Right lobe of liver (tissue), 6 donors: ENCODE measurements at regions of chr22 and their contacts with region 1.

Region 1: DNA sequence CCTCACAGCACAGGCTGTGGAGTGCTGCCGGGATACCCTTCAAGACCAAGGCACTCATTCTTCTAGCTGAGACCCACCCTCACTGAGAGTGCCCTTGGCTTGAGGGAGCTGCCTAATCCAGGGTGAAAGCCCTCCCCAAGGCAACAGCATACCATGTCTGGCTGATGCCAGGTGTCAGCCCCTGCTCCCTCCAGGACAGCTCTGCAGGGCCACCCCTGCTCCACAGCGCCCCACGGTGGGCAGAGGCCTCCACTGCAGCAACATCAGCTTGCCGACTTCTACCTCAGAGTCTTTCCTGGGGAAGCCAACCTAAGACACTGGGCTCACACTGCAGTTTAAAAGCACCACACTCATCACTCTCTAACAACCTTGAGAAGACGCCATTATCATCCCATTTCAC is 29.0 kb downstream of the TTLL1 start:
- DNase-seq: no peak
- ATAC-seq: peak; percentile 37 to 55 (median 46)
- H3K4me3 ChIP-seq: no peak overlapping the region
- H3K27ac ChIP-seq: no peak overlapping the region
- H3K4me1 ChIP-seq: no peaks in the 10 kb centered on the region
- H3K27me3 ChIP-seq: no peaks in the 10 kb centered on the region
- CTCF ChIP-seq: peak; percentile 26 to 50 (median 36)
- POLR2A ChIP-seq: no peak

Region 2: DNA sequence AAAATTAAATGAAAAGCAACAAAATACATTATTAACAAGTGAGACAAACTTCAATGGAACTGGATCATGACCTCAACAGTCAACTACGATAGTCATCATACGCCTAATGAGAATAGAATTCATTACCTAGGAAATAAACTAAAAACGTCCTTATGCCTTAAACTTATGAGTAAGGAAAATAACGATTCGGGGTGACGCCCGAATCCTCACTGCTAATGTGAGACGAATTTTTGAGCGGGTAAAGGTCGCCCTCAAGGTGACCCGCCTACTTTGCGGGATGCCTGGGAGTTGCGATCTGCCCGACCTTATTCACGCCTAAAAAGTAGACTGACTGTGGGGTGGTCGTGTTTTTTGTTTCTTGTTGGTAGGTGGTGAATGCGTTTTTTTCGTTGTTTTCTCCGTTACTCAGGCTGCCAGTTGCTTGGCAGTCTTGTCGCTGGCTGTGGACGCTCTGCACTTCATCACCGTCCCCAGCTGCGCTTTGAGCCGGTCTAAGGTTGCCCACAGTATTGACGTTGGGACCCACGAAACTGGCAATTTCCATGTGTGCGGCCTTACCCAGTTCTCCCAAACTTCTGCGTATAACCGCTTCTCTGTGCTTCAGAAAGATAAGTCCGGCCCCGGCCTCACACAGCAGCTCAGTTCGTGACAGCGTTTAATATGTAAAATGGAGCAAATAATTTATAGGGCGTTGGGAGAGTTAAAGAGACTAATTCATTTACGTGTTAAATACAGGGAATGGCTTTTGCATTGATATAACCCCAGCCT is 444.9 kb before region 1 on chr22:
- intact Hi-C with region 1: no loop called
- DNase-seq: peak; percentile 84 to 92 (median 88)
- ATAC-seq: peak; percentile 60 to 76 (median 72)
- H3K4me3 ChIP-seq: peak overlapping the region; percentile 88 to 94 (median 93)
- H3K27ac ChIP-seq: peak overlapping the region; percentile 92 to 96 (median 94)
- H3K4me1 ChIP-seq: peaks cover 0 to 32% (median 20%) of the 10 kb centered on the region in 4 donors
- H3K27me3 ChIP-seq: no peaks in the 10 kb centered on the region
- CTCF ChIP-seq: no peak
- POLR2A ChIP-seq: peak; percentile 94

Region 3: GRCh38 chr22:43126480-43127165 is 66.4 kb after region 1 on chr22:
- intact Hi-C with region 1: loop called in 1 of 2 experiments (anchors 10 kb)
- DNase-seq: no peak
- ATAC-seq: peak in 1 of 4 donors; percentile 68
- H3K4me3 ChIP-seq: no peak overlapping the region
- H3K27ac ChIP-seq: peak overlapping the region in 1 of 3 donors; percentile 18
- H3K4me1 ChIP-seq: peaks cover 0 to 11% (median 2%) of the 10 kb centered on the region in 4 donors
- H3K27me3 ChIP-seq: no peaks in the 10 kb centered on the region
- CTCF ChIP-seq: no peak
- POLR2A ChIP-seq: no peak